ENCODE measurements at regions of chr16 and their contacts with region 1.

Region 1: GRCh38 chr16:29995911-29996772 is at the start of gene INO80E:
- DNase-seq: peak; percentile 94
- H3K4me3 ChIP-seq: peak within 1 kb of the TSS; percentile 72 to 96 (median 86)
- H3K27ac ChIP-seq: peak within 1 kb of the TSS; percentile 91
- H3K4me1 ChIP-seq: peaks cover 23% of the 10 kb centered on the region
- H3K27me3 ChIP-seq: no peaks in the 10 kb centered on the region
- CTCF ChIP-seq: no peak
- total RNA-seq, gene INO80E: 27.7 to 62.2 TPM

Region 2: DNA sequence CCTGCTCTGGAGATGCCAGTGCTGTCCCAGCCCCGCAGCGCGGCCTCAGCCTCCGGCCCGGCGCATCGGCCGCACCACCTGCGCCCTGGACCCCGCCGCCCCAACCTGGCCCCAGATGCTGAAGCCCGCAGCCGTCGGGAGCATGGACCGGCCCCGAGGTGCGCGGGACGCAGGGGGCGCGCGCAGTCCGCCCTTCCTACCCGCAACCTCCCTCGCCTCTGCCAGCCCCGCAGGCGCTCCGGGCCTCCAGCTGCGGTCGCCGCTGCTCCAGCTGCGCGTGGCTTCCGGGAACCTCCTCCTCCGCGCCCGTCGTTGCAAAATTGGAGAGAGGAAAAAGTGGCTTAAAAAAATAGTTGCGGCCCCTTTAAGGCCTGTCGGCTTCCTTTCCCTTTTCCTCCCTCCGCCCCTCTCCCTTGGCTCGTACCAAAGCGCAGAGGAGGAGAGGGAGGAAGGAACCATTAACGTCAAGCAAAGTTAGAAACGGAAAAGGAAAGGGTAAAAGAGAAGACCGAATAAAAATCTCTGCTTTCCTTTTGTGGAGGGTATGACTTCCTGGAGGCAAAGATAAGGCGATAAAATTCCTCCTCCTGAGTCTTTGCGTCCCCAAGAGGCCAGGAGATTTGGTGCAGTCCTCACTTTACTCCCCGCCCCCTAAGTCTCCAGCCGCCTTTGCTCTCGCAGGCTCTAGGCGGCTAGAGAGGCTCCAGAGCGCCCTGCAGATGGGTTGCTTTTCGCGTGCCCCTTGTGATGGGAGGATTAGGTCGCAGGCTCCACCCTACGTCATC is 133.1 kb before region 1 on chr16 and contains the start of gene CDIPT:
- CTCF ChIA-PET with region 1: no interaction called
- dilution Hi-C with region 1: no loop called
- in situ Hi-C with region 1: no loop called
- intact Hi-C with region 1: loop called (anchors 2 kb)
- DNase-seq: peak; percentile 92
- H3K4me3 ChIP-seq: peak within 1 kb of the TSS; percentile 83 to 97 (median 89)
- H3K27ac ChIP-seq: peak within 1 kb of the TSS; percentile 98
- H3K4me1 ChIP-seq: peaks cover 3% of the 10 kb centered on the region
- H3K27me3 ChIP-seq: no peaks in the 10 kb centered on the region
- CTCF ChIP-seq: peak; percentile 58 to 72
- total RNA-seq, gene CDIPT: 47.8 to 72.2 TPM

Region 3: DNA sequence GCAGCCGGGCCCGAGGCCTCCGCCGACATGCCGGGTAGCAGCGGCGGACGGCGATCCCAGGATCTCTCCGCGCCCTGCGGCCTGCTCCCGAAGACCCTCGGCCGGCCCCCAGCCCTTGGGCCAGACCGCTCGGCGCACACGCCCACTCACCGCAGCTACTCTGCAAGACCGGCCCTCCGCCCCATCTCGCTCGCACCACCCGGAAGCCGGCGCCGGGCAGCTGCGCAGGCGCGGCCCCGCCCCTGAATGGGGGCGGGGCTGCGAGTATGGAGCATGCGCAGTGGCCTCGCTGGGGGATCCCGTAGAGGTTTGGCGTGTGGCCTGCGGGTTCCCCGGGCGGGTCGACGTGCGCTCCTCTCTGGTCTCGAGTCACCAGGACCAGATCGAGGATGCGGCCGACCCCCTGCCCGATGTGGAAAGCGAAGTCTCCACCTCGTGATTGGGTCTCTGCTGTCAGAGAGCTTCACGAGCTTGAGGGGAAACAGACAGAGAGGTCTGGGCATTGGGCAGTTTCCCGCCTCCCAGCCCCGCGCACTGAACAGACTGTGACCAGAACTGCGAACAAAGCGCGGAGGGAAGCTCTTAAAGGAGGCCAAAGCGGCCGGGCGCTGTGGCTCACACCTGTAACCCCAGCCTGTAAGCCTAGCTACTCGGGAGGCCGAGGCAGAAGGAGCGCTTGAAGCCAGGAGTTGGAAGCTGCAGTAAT is 70.0 kb before region 1 on chr16 and contains the start of gene KCTD13:
- CTCF ChIA-PET with region 1: no interaction called
- dilution Hi-C with region 1: no loop called
- in situ Hi-C with region 1: no loop called
- intact Hi-C with region 1: loop called (anchors 2 kb)
- DNase-seq: peak; percentile 80
- H3K4me3 ChIP-seq: peak within 1 kb of the TSS; percentile 40 to 98 (median 89)
- H3K27ac ChIP-seq: peak within 1 kb of the TSS; percentile 63
- H3K4me1 ChIP-seq: peaks cover 10% of the 10 kb centered on the region
- H3K27me3 ChIP-seq: no peaks in the 10 kb centered on the region
- CTCF ChIP-seq: no peak
- total RNA-seq, gene KCTD13: 11.8 to 27.4 TPM

Region 4: DNA sequence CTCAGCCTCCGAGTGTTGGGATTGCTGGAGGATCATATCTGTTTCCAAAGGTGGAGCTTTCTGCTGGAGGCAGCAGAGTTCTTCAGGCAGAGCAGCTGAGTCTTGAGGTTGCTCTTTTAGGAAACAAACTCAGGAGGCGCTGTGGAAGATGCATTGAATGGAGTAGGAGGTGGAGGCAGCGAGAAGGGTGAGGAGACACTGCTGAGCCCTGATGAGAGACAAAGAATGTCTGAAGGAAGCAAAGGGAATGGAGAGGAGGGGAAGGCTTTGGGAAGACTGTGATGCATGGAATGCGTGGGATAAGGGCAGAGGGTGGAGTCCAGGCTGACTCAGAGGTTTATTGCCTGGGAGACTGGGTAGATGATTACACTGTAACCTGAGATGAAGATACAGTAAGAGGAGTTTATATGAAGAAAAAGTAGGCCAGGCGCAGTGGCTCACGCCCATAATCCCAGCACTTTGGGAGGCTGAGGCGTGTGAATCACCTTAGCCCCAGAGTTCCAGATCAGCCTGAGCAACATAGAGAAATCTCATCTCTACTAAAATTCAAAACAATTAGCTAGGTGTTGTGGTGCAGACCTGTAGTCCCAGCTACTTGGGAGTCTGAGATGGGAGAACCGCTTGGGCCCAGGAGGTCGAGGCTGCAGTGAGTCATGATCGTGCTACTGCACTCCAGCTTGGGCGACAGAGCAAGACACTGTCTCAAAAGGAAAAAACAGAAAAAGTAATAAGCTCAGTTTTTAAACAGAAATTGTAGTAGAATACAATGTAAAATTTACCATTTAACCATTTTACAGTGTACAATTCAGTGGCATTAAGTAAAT is 52.1 kb before region 1 on chr16:
- CTCF ChIA-PET with region 1: no interaction called
- dilution Hi-C with region 1: no loop called
- in situ Hi-C with region 1: no loop called
- intact Hi-C with region 1: no loop called
- DNase-seq: peak; percentile 97
- H3K4me3 ChIP-seq: no peak overlapping the region
- H3K27ac ChIP-seq: peak overlapping the region; percentile 81
- H3K4me1 ChIP-seq: peaks cover 14% of the 10 kb centered on the region
- H3K27me3 ChIP-seq: no peaks in the 10 kb centered on the region
- CTCF ChIP-seq: peak; percentile 24 to 40

Region 5: DNA sequence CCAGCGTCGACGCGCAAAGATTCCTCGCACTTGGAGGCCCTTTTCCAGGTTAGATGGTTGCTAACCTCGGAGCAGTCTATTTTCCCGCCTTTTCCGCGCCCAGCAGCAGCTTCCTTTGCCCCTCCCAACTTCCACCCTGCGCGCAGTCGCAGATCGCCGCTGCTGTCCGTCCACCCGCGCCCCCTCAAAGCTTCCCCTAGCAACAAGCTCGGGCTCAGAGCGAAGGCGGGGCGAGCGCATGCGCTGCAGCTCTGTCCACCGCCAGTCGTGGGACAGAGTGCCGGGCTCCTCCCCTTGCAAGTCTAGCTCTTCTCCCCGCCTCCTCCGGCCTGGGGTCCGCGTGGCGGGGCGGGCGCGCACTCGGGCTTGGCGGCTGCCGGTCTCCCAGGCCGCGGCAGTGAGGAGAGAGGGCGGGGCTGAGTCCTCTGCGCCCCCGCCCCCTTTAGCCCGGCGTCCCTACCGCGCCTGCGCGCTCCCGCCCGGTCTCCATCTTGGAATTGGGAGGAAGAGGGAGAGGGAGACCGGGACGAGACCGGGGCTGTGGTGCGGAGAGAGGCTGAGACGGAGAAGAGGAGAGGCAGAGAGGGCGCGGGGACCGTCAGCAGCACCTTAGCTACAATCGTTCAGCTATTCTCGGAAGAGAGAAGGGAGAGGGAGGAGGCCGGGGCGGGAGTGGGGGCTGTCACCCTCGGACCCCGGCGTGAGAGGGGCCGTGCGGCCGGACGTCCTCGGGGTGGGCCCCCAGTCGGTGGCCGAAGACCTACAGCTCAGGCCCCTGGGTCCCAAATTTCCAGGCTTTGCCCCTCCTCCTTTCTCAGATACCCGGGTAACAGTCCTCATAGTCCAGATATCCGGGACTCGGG is 22.5 kb before region 1 on chr16 and contains the start of gene TAOK2:
- CTCF ChIA-PET with region 1: no interaction called
- dilution Hi-C with region 1: no loop called
- in situ Hi-C with region 1: no loop called
- intact Hi-C with region 1: loop called (anchors 2 kb)
- DNase-seq: peak; percentile 99
- H3K4me3 ChIP-seq: peak within 1 kb of the TSS; percentile 76 to 98 (median 78)
- H3K27ac ChIP-seq: peak within 1 kb of the TSS; percentile 65
- H3K4me1 ChIP-seq: peaks cover 16% of the 10 kb centered on the region
- H3K27me3 ChIP-seq: no peaks in the 10 kb centered on the region
- CTCF ChIP-seq: no peak
- total RNA-seq, gene TAOK2: 39.7 to 40.8 TPM

Region 6: GRCh38 chr16:30065143-30065850 is 69.2 kb after region 1 on chr16 and contains the start of gene ALDOA:
- CTCF ChIA-PET with region 1: no interaction called
- dilution Hi-C with region 1: no loop called
- in situ Hi-C with region 1: no loop called
- intact Hi-C with region 1: loop called (anchors 10 kb)
- DNase-seq: peak; percentile 100
- H3K4me3 ChIP-seq: peak within 1 kb of the TSS; percentile 97 to 100 (median 100)
- H3K27ac ChIP-seq: peak within 1 kb of the TSS; percentile 81
- H3K4me1 ChIP-seq: peaks cover 41% of the 10 kb centered on the region
- H3K27me3 ChIP-seq: no peaks in the 10 kb centered on the region
- CTCF ChIP-seq: no peak
- total RNA-seq, gene ALDOA: 758 to 2,329 TPM

Region 7: GRCh38 chr16:31118198-31119155 is 1122.3 kb after region 1 on chr16:
- CTCF ChIA-PET with region 1: no interaction called
- dilution Hi-C with region 1: no loop called
- in situ Hi-C with region 1: no loop called
- intact Hi-C with region 1: no loop called
- DNase-seq: peak; percentile 97
- H3K4me3 ChIP-seq: peak overlapping the region; percentile 50 to 80 (median 65)
- H3K27ac ChIP-seq: peak overlapping the region; percentile 100
- H3K4me1 ChIP-seq: peaks cover 14% of the 10 kb centered on the region
- H3K27me3 ChIP-seq: no peaks in the 10 kb centered on the region
- CTCF ChIP-seq: no peak

Measured in mammary epithelial cell (primary cell).